Transverse colon (tissue), 4 donors: ENCODE measurements at regions of chr18 and their contacts with region 1.

Region 1: DNA sequence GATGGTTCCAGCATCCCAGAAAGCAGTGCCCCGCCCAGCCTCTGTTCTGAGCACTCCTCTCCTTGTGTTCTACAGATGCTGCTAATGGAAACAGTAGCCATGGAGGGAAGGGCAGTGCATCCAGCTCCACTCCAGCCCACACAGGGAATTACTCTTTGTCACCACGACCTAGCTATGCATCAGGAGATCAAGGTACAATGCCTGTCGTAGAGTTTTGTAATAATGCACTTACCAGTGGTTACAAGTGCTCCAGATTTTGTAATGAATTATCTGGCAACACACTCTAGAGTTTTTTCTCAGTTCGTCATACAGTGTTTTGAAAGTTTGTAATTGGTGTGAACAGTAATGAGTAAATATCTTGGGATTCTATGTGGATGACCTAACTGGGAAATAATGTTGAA is 161.1 kb downstream of the ESCO1 start:
- DNase-seq: no peak
- H3K4me3 ChIP-seq: no peak overlapping the region
- H3K27ac ChIP-seq: no peak overlapping the region
- H3K4me1 ChIP-seq: no peaks in the 10 kb centered on the region
- H3K27me3 ChIP-seq: no peaks in the 10 kb centered on the region
- CTCF ChIP-seq: no peak
- EP300 ChIP-seq: no peak
- POLR2A ChIP-seq: no peak

Region 2: GRCh38 chr18:21203096-21203495 is 236.3 kb before region 1 on chr18:
- in situ Hi-C with region 1: loop called in 3 of 4 experiments (anchors 5 to 25 kb)
- intact Hi-C with region 1: loop called (anchors 5 kb)
- DNase-seq: no peak
- H3K4me3 ChIP-seq: no peak overlapping the region
- H3K27ac ChIP-seq: no peak overlapping the region
- H3K4me1 ChIP-seq: no peaks in the 10 kb centered on the region
- H3K27me3 ChIP-seq: peaks cover 22% of the 10 kb centered on the region
- CTCF ChIP-seq: no peak
- EP300 ChIP-seq: no peak
- POLR2A ChIP-seq: no peak